Activated T-helper 1 cell treated with anti-CD3 and anti-CD28 coated beads, Interleukin-12 subunit alpha, Interleukin-12 subunit beta, Interleukin-2, Interleukin-4 antibody, amounts not matched to agents 30 ng/mL and 10 ng/mL and 1 ng/mL, durations not matched to agents 14 hours and 24 hours and 36 hours (primary cell): ENCODE measurements at regions of chr15 and their contacts with region 1.

Region 1: GRCh38 chr15:69160141-69160993 is at the start of gene GLCE:
- DNase-seq: peak; percentile 92
- H3K4me3 Mint-ChIP-seq: peak within 1 kb of the TSS; percentile 96
- H3K27ac Mint-ChIP-seq: peak within 1 kb of the TSS; percentile 63
- H3K4me1 Mint-ChIP-seq: peaks cover 21% of the 10 kb centered on the region
- H3K27me3 Mint-ChIP-seq: peaks cover 36% of the 10 kb centered on the region
- total RNA-seq, gene GLCE: 2.8 and 2.9 TPM in 2 replicates

Region 2: GRCh38 chr15:68229386-68230156 is 930.8 kb before region 1 on chr15 and contains the start of gene CLN6:
- intact Hi-C with region 1: loop called (anchors 2 kb)
- DNase-seq: peak; percentile 73
- H3K4me3 Mint-ChIP-seq: peak within 1 kb of the TSS; percentile 94
- H3K27ac Mint-ChIP-seq: peak within 1 kb of the TSS; percentile 96
- H3K4me1 Mint-ChIP-seq: peaks cover 40% of the 10 kb centered on the region
- H3K27me3 Mint-ChIP-seq: no peaks in the 10 kb centered on the region
- total RNA-seq, gene CLN6: 95.3 and 98.3 TPM in 2 replicates

Region 3: GRCh38 chr15:69172828-69173227 is 12.5 kb after region 1 on chr15:
- intact Hi-C with region 1: no loop called
- DNase-seq: no peak
- H3K4me3 Mint-ChIP-seq: no peak overlapping the region
- H3K27ac Mint-ChIP-seq: no peak overlapping the region
- H3K4me1 Mint-ChIP-seq: no peaks in the 10 kb centered on the region
- H3K27me3 Mint-ChIP-seq: peaks cover 5% of the 10 kb centered on the region

Region 4: DNA sequence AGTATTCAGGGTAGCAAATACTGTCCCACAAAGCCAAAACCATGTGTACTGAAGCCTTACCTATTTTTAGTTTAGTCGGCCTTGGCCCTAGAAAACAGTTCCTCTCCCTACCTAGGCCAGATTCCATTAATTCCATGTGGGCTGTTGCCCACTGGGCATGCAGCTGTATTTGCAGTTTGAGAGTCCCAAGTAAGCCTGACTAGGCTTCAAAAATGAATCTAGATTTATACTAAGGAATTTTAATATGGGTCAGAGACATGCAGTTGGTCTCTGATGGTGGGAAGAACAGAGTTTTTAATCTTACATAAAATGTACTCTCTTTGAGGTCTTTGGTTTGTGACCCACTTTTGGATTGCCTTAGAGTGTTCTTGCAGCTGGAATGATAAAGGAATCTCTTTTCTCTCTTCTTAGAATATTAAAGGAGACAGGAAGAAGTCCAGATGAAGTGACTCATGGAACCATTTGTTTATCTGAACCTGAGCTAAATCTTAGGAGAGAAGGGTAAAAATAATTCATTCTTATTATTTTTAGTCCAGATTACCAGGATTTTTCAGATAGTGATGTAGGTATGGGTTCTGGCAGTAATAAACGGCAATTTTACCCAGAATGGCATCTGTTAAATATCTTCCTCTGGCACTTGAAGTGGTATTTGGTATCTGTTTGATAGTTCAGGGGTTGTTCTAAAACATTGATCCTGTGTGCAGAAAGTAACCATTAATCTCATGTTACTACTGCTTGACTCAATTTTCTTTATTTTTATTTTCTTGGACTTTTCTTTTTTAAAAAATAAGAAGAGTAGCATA is 33.9 kb after region 1 on chr15:
- intact Hi-C with region 1: loop called (anchors 2 kb)
- DNase-seq: no peak
- H3K4me3 Mint-ChIP-seq: no peak overlapping the region
- H3K27ac Mint-ChIP-seq: no peak overlapping the region
- H3K4me1 Mint-ChIP-seq: no peaks in the 10 kb centered on the region
- H3K27me3 Mint-ChIP-seq: no peaks in the 10 kb centered on the region

Region 5: DNA sequence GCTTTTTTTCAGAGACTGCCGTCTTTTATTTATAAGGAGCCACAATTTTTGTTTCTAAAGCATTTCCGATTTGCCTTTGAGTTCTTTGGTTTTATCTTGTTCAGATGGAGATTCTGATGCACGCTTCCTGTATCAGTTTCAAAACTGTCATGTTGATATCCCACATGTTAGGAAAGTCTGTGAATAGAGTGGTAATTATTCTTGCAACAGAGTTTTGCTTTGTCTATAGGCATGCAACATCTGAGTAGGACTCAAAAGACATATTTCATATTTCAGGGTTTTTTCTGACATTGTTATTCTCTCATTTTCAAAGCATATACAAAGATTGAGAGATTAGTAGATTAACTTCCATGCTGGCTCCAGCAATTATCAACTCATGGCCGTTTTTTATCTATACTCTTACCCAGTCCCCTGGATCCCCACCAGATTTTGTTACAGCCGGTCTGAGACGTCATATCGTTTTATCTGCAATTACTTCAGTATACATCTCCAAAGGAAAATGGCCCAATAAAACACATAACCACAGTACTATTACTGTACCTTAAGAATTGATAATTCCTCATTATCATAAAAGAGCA is 160.7 kb after region 1 on chr15:
- intact Hi-C with region 1: loop called (anchors 1 kb)
- DNase-seq: no peak
- H3K4me3 Mint-ChIP-seq: no peak overlapping the region
- H3K27ac Mint-ChIP-seq: peak overlapping the region; percentile 45
- H3K4me1 Mint-ChIP-seq: peaks cover 12% of the 10 kb centered on the region
- H3K27me3 Mint-ChIP-seq: peaks cover 24% of the 10 kb centered on the region

Region 6: DNA sequence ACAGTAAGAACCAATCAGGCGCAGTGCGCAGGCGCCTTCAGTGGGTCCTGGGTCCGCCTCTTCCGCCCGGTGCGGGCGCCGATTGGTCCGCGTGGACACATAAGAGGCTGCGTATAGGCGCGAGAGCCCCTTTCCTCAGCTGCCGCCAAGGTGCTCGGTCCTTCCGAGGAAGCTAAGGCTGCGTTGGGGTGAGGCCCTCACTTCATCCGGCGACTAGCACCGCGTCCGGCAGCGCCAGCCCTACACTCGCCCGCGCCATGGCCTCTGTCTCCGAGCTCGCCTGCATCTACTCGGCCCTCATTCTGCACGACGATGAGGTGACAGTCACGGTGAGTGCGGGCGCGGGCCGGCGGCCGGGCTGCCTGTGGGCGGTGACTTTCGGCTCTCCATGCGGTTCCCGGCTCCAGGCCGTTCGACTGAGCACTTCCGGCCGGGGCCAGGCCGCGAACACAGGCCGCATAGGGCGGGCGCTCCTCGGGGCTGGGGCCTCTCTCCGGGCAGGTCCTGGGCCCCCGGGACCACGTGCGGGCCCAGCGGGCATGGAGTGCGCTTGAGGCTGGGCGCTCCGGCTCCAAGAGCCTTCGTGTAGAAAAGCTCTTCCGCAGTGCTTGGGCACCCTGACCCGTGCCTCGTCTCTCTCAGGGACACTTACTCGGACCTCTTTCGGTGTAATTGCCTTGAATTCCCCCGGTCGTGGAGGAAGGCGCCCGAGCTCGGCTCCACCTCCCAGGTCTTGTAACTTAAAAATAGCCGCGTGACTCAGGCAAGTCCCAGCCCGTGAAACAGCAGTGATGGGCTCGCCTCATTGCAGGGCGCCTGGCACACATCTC is 292.5 kb after region 1 on chr15 and contains the start of gene RPLP1:
- intact Hi-C with region 1: loop called (anchors 1 kb)
- DNase-seq: peak; percentile 93
- H3K4me3 Mint-ChIP-seq: peak within 1 kb of the TSS; percentile 99
- H3K27ac Mint-ChIP-seq: peak within 1 kb of the TSS; percentile 100
- H3K4me1 Mint-ChIP-seq: peaks cover 35% of the 10 kb centered on the region
- H3K27me3 Mint-ChIP-seq: no peaks in the 10 kb centered on the region
- total RNA-seq, gene RPLP1: 1,633 and 1,710 TPM in 2 replicates